Heart left ventricle (tissue), 16 donors: ENCODE measurements at regions of chr10 and their contacts with region 1.

Region 1: DNA sequence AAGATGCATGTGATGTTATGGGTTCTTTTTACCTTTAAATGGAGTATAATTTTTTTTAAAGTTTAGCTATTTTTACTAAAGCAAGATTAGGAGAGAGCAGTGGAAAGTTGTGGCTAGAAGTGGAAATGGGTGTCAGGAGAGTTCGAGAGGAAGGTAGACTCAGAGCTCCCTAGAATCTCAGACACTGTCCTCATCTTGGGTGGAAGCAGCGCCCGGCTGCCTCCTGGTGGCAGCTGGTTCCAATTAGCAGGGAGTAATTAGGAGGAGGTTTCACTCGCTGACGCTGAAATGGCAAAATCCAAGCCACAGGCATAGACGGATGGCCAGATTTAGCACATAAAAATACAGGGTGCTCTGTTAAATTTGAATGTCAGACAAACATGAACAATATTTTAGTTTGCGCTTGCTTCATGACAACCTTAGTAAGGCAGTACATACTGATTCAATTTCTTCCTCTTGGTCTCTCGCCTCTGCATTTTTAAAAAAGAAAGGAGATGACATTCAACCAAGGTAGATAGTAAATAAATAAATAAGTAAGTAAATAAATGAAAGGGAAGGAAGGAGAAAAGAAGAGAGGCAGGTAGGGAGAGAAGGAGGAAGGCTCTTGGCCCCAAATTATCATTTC is 58.5 kb downstream of the LGI1 start:
- DNase-seq: peak; percentile 34 to 64 (median 44)
- ATAC-seq: peak in 3 of 4 donors; percentile 80 to 87 (median 86)
- H3K4me3 ChIP-seq: no peak overlapping the region
- H3K27ac ChIP-seq: no peak overlapping the region
- H3K4me1 ChIP-seq: peaks cover 0 to 7% (median 0%) of the 10 kb centered on the region in 12 donors
- H3K27me3 ChIP-seq: peaks cover 0 to 19% (median 0%) of the 10 kb centered on the region in 9 donors
- CTCF ChIP-seq: peak; percentile 43 to 77 (median 62)
- POLR2A ChIP-seq: no peak

Region 2: DNA sequence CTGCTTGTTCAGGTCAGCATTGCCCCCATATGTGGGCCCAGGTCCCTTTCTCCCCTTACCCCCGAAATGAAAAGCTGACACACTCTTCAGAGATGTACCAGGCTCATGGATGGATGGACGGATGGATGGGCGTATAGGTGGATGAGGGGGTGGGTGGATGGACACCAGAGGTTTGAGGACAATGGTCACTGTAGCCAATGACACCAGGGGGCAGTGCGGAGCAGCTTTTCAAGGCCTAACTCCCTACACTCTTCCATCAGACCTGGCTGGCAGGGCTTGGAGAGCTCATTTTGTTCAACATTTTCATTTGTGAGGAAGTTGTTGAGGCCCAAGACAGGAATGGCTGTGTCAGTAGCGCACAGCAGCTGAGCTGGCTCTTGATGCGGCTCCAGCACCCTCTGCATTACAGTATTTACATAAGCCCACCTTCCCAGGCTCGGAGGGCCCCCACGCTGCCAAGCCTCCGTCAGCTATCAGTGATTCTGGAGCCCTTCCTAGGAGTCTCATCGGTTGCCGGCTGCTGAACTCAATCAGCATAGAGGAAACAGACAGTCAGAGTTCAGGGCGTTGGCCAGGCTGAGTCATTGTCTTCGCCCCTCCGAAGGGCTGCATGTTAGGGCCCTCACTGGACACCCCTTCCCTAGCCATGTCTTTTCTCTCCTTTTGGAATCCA is 261.3 kb before region 1 on chr10:
- intact Hi-C with region 1: loop called in 3 of 10 experiments (anchors 5 to 10 kb)
- DNase-seq: peak; percentile 58 to 81 (median 61)
- ATAC-seq: peak in 3 of 4 donors; percentile 84 to 89 (median 89)
- H3K4me3 ChIP-seq: no peak overlapping the region
- H3K27ac ChIP-seq: peak overlapping the region in 1 of 12 donors; percentile 62
- H3K4me1 ChIP-seq: peaks cover 0 to 21% (median 0%) of the 10 kb centered on the region in 12 donors
- H3K27me3 ChIP-seq: no peaks in the 10 kb centered on the region
- CTCF ChIP-seq: peak; percentile 47 to 73 (median 60)
- POLR2A ChIP-seq: no peak

Region 3: GRCh38 chr10:93639791-93640190 is 176.4 kb before region 1 on chr10:
- intact Hi-C with region 1: no loop called
- DNase-seq: no peak
- ATAC-seq: no peak
- H3K4me3 ChIP-seq: no peak overlapping the region
- H3K27ac ChIP-seq: no peak overlapping the region
- H3K4me1 ChIP-seq: no peaks in the 10 kb centered on the region
- H3K27me3 ChIP-seq: no peaks in the 10 kb centered on the region
- CTCF ChIP-seq: no peak
- POLR2A ChIP-seq: no peak

Region 4: DNA sequence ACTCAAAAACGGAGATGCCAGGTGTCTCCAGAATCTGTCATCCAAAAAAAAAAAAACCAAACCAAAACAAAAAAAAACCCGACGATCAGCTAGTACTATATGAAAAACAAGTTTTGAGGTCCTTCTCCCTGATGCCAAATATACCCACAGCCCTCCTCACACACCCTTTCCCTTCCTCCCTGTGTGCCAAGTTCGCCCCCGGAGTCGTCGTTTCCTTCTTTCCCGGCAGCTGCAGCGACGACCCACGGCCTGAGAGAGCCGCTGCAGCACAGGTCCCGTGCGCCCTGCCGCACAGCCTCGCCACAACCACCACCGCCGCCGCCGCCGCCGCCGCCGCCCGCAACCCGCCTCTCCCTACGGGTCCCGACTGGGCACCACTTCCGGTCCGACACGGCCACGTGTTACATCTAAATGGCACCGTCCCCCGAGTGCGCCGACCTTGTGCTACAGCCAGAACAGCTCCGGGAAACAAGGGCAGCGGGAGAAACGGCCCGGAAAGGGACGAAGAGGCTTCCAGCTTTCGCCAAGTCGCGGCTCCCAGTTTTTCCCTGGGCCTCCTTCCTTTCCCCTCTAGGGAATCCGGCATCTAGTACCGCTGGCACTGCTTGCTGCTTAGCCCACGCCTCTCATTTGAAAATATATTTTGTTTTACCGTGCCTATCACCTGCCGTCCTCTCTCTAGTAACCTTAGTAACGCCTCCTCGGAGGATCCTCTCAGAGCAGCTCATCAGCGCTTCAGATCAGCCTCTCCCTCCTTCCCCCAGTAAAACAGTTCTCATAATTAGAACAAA is 113.8 kb before region 1 on chr10 and contains the start of gene FRA10AC1:
- intact Hi-C with region 1: loop called in 7 of 10 experiments (anchors 1 to 10 kb)
- DNase-seq: peak; percentile 92 to 96 (median 94)
- ATAC-seq: peak; percentile 98 to 99 (median 98)
- H3K4me3 ChIP-seq: peak within 1 kb of the TSS; percentile 49 to 83 (median 69)
- H3K27ac ChIP-seq: peak within 1 kb of the TSS; percentile 65 to 90 (median 86)
- H3K4me1 ChIP-seq: peaks cover 0 to 23% (median 9%) of the 10 kb centered on the region in 12 donors
- H3K27me3 ChIP-seq: no peaks in the 10 kb centered on the region
- CTCF ChIP-seq: peak; percentile 7 to 66 (median 40)
- POLR2A ChIP-seq: peak in 1 of 2 donors; percentile 69
- total RNA-seq, gene FRA10AC1: 5.0 to 20.4 (median 12.2) TPM

Region 5: DNA sequence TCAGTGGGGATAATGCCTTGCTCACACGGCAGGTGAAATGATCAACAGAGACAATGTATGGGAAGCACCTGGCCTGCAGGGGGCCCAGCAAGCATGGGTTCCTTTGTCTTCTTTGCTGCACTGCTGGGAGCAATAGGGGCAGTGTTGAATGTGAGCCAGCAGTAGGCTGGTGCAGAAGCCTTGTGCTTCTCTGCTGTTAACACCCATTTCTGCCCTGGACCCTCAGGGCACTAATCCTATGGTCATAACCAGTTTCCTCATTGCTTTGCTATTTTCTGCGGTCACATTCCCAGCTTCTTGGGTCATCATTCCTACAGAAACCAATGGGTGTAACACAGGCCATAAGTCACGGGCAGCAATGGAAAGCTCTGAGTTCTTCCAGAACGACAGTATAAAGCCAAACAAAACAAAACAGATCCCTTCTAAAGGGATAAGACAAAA is 69.4 kb before region 1 on chr10:
- intact Hi-C with region 1: loop called in 2 of 10 experiments (anchors 5 kb)
- DNase-seq: no peak
- ATAC-seq: peak in 1 of 4 donors; percentile 44
- H3K4me3 ChIP-seq: no peak overlapping the region
- H3K27ac ChIP-seq: peak overlapping the region in 2 of 12 donors; percentile 34 to 42
- H3K4me1 ChIP-seq: peaks cover 0 to 38% (median 0%) of the 10 kb centered on the region in 12 donors
- H3K27me3 ChIP-seq: peaks cover 0 to 5% (median 0%) of the 10 kb centered on the region in 9 donors
- CTCF ChIP-seq: no peak
- POLR2A ChIP-seq: no peak

Region 6: GRCh38 chr10:93838278-93838677 is 22.0 kb after region 1 on chr10:
- intact Hi-C with region 1: no loop called
- DNase-seq: no peak
- ATAC-seq: no peak
- H3K4me3 ChIP-seq: no peak overlapping the region
- H3K27ac ChIP-seq: no peak overlapping the region
- H3K4me1 ChIP-seq: no peaks in the 10 kb centered on the region
- H3K27me3 ChIP-seq: no peaks in the 10 kb centered on the region
- CTCF ChIP-seq: no peak
- POLR2A ChIP-seq: no peak